Heart left ventricle (tissue), 16 donors: ENCODE measurements at regions of chr6 and their contacts with region 1.

Region 1: DNA sequence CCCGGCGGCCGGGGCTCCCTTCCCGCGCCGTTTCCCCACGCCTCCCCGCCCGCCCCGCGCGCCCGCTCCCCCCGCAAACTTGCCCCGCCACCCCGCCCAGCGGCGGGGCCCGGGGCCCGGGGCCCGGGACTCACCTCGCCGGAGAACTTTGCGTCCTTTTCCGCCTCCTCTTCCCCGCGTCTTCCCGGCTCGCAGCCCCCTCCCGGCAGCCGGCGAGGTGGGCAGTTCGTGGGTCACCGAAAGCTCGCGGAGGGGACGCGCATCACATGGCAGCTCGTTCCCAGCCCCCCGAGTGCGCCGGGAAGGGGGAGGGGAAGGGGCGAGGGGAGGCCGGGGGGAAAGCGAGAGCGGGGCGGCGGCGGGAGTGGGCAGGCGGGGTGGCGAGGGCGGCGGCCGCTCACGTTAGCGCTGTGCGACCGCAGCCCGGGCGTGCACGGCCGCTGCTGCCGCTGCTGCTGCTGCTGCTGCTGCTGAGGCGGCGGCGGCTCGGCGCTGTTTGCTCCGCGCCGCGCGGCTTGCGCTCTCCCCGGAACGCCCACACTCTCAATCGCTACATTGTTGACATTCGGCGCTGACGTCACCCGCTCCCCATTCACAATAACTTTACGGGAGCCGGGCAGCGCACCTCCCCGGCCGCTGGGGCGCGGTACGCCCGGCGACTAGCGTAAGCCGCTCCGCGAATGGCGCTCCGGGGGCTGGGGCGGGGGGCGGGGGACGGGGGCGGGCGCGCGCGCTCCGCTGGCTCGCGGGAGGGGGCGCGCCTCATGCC is at the start of gene BACH2:
- DNase-seq: peak; percentile 90 to 92 (median 91)
- ATAC-seq: peak; percentile 76 to 83 (median 82)
- H3K4me3 ChIP-seq: peak within 1 kb of the TSS; percentile 66 to 93 (median 80)
- H3K27ac ChIP-seq: peak within 1 kb of the TSS; percentile 67 to 93 (median 84)
- H3K4me1 ChIP-seq: peaks cover 0 to 17% (median 7%) of the 10 kb centered on the region in 12 donors
- H3K27me3 ChIP-seq: peaks cover 0 to 30% (median 0%) of the 10 kb centered on the region in 9 donors
- CTCF ChIP-seq: peak in 6 of 12 donors; percentile 11 to 34 (median 24)
- POLR2A ChIP-seq: peak in 1 of 2 donors; percentile 49
- total RNA-seq, gene BACH2: 0.76 to 8.4 (median 4.0) TPM

Region 2: DNA sequence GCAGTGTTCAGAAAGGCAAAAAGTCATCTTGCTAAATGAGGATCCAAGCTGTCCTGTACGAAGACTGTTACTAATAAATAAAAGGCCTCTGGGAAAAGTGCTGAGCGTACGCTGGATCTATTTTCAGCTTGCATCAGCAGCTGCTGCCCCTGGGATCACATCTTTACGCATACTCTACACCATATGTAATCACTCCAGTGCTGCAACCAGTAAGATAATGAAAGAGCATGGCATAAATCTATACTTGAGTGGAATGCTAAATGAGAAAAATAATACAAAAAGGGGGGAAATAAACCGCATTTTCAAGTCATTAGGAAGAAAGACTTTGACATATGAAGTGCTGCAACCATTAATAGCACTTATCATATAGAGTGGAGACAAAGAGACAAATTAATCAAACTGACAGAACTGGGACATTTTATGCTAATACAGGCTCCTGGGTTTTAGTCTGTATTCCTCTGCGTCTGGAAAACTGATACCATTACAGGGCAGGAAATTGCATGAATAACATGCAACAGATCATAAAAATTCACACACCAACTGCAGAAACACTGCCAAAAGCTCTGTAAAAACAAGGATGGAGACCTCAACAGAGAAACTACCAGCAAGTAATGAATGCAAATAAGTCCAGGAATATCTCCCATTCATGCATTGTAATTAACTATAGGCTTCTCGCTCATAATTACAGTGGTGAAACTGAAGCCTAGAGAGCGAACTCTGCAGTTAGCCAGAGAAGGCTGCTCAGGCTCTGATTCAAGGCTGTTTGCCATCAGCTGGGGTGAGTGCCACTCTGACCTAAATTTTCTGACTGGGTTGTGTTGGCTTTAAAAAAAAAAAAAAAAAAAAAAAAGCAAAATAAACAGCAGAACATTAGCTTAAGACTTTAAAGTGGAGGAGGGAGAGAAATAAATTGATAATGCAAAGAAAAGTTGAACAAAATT is 318.5 kb before region 1 on chr6:
- intact Hi-C with region 1: loop called in 8 of 10 experiments (anchors 2 to 10 kb)
- DNase-seq: peak in 3 of 5 donors; percentile 35 to 63 (median 41)
- ATAC-seq: peak; percentile 76 to 85 (median 80)
- H3K4me3 ChIP-seq: no peak overlapping the region
- H3K27ac ChIP-seq: peak overlapping the region in 7 of 12 donors; percentile 7 to 48 (median 35)
- H3K4me1 ChIP-seq: peaks cover 0 to 38% (median 12%) of the 10 kb centered on the region in 12 donors
- H3K27me3 ChIP-seq: no peaks in the 10 kb centered on the region
- CTCF ChIP-seq: no peak
- POLR2A ChIP-seq: no peak

Region 3: GRCh38 chr6:90103056-90103800 is 193.3 kb before region 1 on chr6:
- intact Hi-C with region 1: loop called in 4 of 10 experiments (anchors 5 to 10 kb)
- DNase-seq: no peak
- ATAC-seq: no peak
- H3K4me3 ChIP-seq: peak overlapping the region in 1 of 12 donors; percentile 16
- H3K27ac ChIP-seq: no peak overlapping the region
- H3K4me1 ChIP-seq: peaks cover 0 to 52% (median 4%) of the 10 kb centered on the region in 12 donors
- H3K27me3 ChIP-seq: no peaks in the 10 kb centered on the region
- CTCF ChIP-seq: no peak
- POLR2A ChIP-seq: no peak

Region 4: DNA sequence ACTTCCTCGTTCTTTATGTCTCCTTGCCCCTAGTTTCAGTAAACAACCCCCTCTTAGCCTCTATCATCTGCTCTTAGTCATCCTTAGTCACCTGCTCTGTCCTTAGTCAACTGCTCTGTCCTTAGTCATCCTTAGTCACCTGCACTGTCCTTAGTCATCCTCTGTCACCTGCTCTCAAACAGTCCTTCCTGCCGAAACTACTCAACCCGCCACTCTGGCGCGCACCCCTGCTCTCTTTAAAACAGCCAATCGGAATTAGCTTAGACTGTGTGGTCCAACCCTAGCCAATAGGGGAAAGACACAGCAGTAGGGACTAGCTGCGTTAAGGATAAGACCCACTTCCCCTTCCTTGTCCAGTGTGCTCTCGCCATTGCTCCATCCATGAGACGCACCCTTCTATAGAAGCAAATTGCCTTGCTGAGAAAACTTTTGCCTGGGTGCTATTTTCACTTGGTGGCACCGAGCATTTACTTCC is 73.8 kb before region 1 on chr6:
- intact Hi-C with region 1: loop called in 6 of 10 experiments (anchors 2 to 5 kb)
- DNase-seq: no peak
- ATAC-seq: no peak
- H3K4me3 ChIP-seq: no peak overlapping the region
- H3K27ac ChIP-seq: no peak overlapping the region
- H3K4me1 ChIP-seq: peaks cover 0 to 33% (median 18%) of the 10 kb centered on the region in 12 donors
- H3K27me3 ChIP-seq: no peaks in the 10 kb centered on the region
- CTCF ChIP-seq: no peak
- POLR2A ChIP-seq: no peak

Region 5: DNA sequence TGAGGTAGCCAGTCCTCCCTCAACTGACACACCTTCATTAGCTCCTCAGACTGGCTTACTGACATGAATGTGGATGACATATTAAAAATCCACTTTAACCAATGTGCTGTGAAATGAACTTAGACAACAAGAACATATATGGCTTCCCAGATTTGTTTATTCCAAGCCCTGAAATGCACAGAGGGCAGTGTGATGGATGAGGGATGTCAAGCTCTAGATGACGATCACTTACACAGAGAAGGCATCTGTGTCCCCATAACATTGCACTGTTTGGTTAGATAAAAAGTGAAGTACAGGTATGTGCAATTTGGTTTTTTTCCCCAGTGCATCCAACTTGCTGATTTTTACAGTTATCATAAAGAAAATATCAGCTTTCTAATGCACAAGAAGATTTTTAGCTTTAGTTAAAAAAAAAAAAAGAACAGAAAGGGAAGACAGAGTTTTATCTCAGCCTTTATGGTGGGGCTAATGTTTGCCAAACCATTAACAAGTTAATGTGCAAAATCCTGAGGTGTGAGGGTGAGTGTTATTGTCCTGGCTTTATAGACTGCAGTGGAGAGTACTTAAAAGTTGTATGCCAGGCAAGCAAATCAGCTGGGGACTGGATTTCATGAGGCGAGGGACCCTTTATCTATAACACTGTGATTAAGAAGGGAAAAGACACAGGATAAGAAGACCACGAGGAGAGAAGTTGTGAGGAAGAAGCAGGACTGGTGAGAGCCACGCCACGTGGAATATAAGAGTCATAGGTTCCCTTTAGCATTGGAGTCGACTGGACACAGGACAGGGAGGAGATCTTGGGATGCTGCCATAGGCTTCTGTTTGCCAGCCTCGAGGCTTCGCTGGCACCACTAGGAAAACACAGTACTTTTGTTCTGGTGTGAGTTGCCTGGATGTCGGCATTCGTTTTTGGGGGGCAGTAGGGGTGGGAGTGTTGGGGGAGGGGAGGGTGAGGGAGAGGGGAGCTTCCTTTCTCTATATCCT is 90.2 kb after region 1 on chr6:
- intact Hi-C with region 1: loop called in 3 of 10 experiments (anchors 5 kb)
- DNase-seq: peak in 1 of 5 donors; percentile 18
- ATAC-seq: peak in 3 of 4 donors; percentile 75 to 78 (median 76)
- H3K4me3 ChIP-seq: no peak overlapping the region
- H3K27ac ChIP-seq: no peak overlapping the region
- H3K4me1 ChIP-seq: peaks cover 0 to 3% (median 0%) of the 10 kb centered on the region in 12 donors
- H3K27me3 ChIP-seq: no peaks in the 10 kb centered on the region
- CTCF ChIP-seq: no peak
- POLR2A ChIP-seq: no peak